Ovary (tissue), 10 donors: ENCODE measurements at regions of chr4 and their contacts with region 1.

Region 1: DNA sequence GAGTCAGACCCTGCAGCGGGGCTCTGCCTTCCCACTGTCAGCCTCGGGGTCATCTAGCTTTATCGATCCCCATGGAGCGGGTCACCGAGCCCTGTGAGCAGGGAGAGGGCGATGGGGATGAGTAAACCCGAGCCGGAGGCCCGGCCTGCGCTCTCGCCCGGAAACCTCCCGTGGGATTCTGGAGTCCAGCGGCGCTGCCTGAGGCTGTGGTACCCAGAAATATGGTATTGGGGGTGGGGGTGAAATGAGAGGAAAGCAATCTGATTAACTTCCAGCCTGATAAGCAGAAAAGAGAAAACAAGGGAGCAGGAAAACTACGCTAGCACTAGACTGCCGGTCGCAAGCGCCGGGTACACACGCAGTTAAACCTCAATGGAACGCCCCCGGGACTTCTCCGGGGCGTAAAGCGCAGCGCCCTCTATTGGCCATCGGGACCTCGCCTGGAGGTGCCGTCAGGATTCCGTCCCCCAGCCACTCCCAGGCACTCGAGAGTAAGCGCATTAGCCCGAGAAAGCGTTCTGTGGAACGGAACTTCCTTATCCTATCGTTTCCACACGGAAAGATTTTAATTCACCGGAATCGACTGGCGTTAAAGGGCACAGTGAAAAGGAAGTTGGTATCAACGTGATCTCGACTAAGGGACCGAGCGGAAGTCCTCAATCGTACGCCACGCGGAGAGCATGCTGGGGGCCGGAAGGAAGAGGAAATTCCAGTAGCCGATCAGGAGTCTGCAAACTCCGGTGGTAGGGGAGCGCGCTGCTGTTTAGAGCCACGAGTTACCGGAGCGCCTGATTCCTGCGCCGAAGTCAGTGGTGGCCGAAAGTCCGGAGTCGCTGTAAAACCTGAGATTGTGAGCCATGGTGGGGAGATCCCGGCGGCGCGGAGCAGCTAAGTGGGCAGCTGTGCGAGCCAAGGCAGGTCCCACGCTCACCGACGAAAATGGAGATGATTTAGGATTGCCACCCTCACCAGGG is at the start of gene UTP3:
- DNase-seq: peak; percentile 96 to 98 (median 97)
- H3K4me3 ChIP-seq: peak within 1 kb of the TSS; percentile 83
- H3K27ac ChIP-seq: peak within 1 kb of the TSS; percentile 74 to 90
- H3K4me1 ChIP-seq: peaks cover 4% of the 10 kb centered on the region
- H3K27me3 ChIP-seq: no peaks in the 10 kb centered on the region
- CTCF ChIP-seq: peak; percentile 93 to 99 (median 94)
- EP300 ChIP-seq: no peak
- POLR2A ChIP-seq: peak; percentile 74
- total RNA-seq, gene UTP3: 10.3 to 25.0 (median 21.5) TPM

Region 2: GRCh38 chr4:70654605-70655011 is 33.5 kb before region 1 on chr4:
- intact Hi-C with region 1: no loop called
- DNase-seq: no peak
- H3K4me3 ChIP-seq: no peak overlapping the region
- H3K27ac ChIP-seq: no peak overlapping the region
- H3K4me1 ChIP-seq: no peaks in the 10 kb centered on the region
- H3K27me3 ChIP-seq: no peaks in the 10 kb centered on the region
- CTCF ChIP-seq: no peak
- EP300 ChIP-seq: no peak
- POLR2A ChIP-seq: no peak

Region 3: DNA sequence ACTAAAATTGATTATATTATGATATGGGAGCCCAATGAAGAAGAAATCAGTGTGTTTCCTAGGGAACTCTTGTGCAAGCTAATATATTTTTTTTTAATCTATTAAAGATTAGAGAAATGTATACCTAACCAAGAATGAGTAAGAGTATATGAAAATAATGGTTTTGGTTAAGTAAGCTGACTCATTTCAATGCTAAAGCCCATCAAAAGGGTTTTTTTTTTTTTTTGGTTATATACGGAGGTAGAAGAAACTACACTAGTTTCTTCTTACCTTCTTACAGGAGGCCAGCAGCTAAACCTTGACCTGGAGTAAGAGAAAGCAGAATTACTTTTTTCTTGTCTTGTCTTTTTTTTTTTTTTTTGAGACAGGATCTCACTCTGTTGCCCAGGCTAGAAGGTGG is 61.2 kb after region 1 on chr4:
- intact Hi-C with region 1: no loop called
- DNase-seq: no peak
- H3K4me3 ChIP-seq: no peak overlapping the region
- H3K27ac ChIP-seq: no peak overlapping the region
- H3K4me1 ChIP-seq: peaks cover 7% of the 10 kb centered on the region
- H3K27me3 ChIP-seq: no peaks in the 10 kb centered on the region
- CTCF ChIP-seq: no peak
- EP300 ChIP-seq: no peak
- POLR2A ChIP-seq: no peak

Region 4: DNA sequence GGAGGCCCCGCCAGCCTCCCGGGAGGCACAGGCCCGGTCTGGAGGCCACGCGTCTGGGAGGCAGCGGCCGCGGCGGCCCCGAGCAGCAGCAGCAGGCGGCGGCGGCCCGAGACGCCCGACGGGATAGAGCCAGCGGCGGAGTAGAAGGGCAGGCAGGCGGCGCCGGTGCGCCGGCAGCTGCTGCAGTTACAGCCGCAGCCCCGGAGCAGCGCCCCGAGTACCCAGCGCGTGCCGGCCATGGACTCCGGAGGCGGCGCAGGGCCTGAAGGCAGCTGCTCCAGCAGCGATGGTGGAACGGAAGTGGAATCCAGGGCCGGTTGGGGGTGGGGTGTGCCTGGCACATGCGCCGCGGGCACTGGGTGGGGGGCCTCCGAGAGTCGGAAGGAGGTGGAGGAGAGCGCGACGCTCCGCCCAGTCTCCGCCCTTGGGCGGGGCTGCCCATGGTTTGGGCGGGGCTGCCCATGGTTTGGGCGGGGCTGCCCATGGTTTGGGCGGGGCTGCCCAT is 151.5 kb after region 1 on chr4 and contains the start of gene GRSF1:
- intact Hi-C with region 1: loop called in 1 of 4 experiments (anchors 5 kb)
- DNase-seq: peak; percentile 92 to 95 (median 94)
- H3K4me3 ChIP-seq: peak within 1 kb of the TSS; percentile 97
- H3K27ac ChIP-seq: peak within 1 kb of the TSS; percentile 89 to 95
- H3K4me1 ChIP-seq: peaks cover 5% of the 10 kb centered on the region
- H3K27me3 ChIP-seq: no peaks in the 10 kb centered on the region
- CTCF ChIP-seq: no peak
- EP300 ChIP-seq: no peak
- POLR2A ChIP-seq: peak; percentile 59
- total RNA-seq, gene GRSF1: 28.4 to 48.3 (median 44.3) TPM

Region 5: DNA sequence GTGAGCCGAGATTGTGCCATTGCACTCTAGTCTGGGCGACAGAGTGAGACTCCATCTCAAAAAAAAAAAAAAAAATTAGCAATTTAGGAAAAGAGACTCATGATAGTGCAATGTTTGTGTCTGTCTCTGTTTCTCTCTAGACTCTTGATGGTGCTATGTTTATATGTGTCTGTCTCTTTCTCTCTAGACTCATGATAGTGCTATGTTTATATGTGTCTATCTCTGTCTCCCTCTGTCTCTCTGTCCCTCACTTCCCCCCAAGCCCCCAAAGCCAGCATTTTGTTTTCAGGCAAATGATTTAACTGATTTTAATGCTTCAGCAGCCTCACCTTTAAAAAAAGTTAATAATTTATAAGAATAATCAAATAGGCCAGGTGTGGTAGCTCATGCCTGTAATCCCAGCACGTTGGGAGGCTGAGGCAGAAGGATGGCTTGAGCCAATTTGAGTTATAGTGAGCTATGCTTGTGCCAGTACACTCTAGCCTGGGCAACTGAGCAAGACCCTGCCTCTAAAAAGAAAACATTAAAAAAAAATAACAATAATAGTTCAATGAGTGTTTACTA is 221.0 kb after region 1 on chr4:
- intact Hi-C with region 1: loop called in 1 of 4 experiments (anchors 5 kb)
- DNase-seq: no peak
- H3K4me3 ChIP-seq: no peak overlapping the region
- H3K27ac ChIP-seq: no peak overlapping the region
- H3K4me1 ChIP-seq: peaks cover 5% of the 10 kb centered on the region
- H3K27me3 ChIP-seq: no peaks in the 10 kb centered on the region
- CTCF ChIP-seq: no peak
- EP300 ChIP-seq: no peak
- POLR2A ChIP-seq: no peak